ENCODE measurements at regions of chr19 and their contacts with region 1.

Region 1: GRCh38 chr19:35931161-35931873 is 4.9 kb upstream of the LRFN3 start:
- DNase-seq: peak; percentile 99
- ATAC-seq: peak; percentile 99

Region 2: DNA sequence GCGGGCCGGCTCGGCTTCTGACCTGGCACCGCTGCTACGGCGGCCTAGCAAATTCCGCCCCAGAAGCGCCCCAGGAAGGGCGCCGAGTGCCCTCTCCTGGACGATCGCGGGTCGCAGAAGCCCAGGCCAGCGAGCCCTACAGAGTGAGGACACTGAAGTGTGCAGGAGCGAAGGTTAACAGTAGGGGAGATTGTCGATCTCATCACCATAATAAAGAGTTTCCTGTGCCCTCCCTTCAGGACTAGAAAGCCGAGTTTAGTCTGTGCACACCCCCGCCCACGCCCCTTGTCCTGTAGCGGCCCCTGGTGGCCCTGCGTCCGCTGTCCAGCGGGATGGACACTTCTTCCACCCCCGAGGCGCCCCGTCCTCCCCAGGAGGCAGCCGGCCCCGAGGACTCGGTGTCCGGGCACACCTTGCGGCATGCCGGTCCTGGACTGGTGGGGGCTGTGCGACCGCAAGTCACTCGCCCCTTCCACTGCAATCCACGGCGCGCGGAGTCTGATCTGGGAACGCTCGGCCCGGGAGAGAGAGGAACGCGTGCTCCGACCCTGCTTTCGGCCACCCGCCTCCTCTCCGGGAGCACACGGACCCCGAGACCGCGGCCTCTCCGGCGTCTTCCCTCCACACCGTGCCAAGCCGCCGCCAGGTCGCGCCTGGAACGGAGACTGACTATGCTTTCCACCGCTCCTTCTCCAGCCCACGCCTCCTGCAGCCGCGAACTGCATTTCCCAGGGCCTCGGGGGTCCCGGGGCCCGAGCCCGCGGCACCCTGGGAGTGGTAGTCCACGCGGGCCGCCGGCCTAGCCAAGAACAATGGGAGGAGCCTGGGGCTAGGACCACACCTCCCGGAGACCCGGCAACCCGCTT is 214.3 kb before region 1 on chr19:
- intact Hi-C with region 1: loop called (anchors 10 kb)
- DNase-seq: peak; percentile 97
- ATAC-seq: peak; percentile 95

Region 3: DNA sequence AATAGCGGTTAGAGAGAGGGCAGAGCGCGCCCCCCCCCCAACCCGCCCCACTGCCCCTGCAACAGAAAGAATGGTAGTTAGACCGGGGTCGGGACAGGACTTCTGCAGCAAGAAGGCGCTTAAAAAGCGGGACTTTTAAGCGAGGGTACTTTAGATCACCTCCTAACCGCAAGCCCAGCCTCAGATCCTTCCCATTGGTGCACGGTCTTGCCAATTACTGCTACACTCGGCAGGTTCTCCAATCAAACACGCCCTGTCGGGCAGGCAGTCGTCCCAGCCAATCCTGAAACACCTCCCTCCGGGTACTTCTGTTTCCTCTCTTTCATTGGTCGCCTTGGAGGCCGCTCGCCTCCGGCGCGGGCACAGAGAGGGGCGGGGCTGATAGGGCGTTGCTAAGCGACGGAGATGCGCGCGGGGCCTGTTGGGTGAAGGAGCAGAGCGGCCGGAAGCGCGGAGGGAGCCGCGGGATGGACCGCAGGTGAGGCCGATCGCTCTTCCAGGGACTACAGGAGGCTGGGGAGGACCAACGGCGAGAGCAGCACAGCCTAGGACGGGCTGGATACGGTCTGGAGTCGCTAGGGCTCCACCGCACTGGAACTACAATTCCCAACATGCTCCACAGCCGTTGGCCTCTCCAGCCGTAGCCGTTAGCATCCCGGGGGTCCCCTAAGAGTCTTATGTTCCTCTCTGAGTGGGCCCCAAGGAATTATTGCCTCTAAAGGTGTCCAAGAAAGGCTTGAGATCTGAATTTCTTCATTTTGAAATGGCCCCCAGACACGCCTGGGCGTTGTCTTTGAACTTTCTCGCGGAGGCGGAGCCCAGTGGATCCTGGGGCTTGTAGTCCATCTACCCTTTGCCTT is 173.3 kb before region 1 on chr19 and contains the start of gene PROSER3:
- intact Hi-C with region 1: loop called (anchors 5 kb)
- DNase-seq: peak; percentile 99
- ATAC-seq: peak; percentile 76
- total RNA-seq, gene PROSER3: 5.9 TPM

Region 4: GRCh38 chr19:35879770-35880317 is 51.5 kb before region 1 on chr19:
- intact Hi-C with region 1: loop called (anchors 5 kb)
- DNase-seq: peak; percentile 96
- ATAC-seq: peak; percentile 98

Measured in Right ventricle myocardium superior (tissue), 1 donor.